ENCODE measurements at regions of chr1 and their contacts with region 1.

Region 1: DNA sequence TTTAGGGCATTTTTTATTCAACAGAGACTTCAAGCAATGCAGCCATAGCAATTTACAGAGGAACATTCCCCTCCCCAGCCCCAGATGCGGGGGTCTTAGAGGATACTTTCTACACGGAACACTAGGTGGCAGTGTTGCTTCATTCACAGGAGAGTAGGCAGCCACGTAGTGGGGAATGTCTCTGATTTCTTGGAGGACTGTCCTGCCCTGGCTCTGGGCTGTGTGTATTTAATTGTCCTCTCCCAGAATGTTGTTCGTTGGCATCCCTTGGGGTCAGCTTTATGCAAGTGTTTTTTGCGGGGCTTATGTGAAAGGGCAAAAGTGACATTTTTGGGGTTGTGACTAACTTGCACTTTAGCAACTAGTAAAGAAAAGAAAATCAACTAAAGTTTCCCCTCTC is 96.9 kb downstream of the PAPPA2 start:
- DNase-seq: peak in 1 of 2 donors; percentile 62
- ATAC-seq: peak; percentile 79 to 96 (median 92)
- H3K4me3 ChIP-seq: no peak overlapping the region
- H3K27ac ChIP-seq: no peak overlapping the region
- H3K4me1 ChIP-seq: peaks cover 0 to 11% (median 2%) of the 10 kb centered on the region in 9 donors
- H3K27me3 ChIP-seq: peaks cover 0 to 14% (median 5%) of the 10 kb centered on the region in 7 donors
- CTCF ChIP-seq: peak; percentile 69 to 92 (median 85)

Region 2: GRCh38 chr1:176434234-176434633 is 125.6 kb before region 1 on chr1:
- intact Hi-C with region 1: no loop called
- DNase-seq: no peak
- ATAC-seq: peak in 2 of 8 donors; percentile 15 to 82
- H3K4me3 ChIP-seq: no peak overlapping the region
- H3K27ac ChIP-seq: peak overlapping the region in 1 of 10 donors; percentile 7
- H3K4me1 ChIP-seq: peaks cover 0 to 10% (median 0%) of the 10 kb centered on the region in 9 donors
- H3K27me3 ChIP-seq: no peaks in the 10 kb centered on the region
- CTCF ChIP-seq: no peak

Region 3: DNA sequence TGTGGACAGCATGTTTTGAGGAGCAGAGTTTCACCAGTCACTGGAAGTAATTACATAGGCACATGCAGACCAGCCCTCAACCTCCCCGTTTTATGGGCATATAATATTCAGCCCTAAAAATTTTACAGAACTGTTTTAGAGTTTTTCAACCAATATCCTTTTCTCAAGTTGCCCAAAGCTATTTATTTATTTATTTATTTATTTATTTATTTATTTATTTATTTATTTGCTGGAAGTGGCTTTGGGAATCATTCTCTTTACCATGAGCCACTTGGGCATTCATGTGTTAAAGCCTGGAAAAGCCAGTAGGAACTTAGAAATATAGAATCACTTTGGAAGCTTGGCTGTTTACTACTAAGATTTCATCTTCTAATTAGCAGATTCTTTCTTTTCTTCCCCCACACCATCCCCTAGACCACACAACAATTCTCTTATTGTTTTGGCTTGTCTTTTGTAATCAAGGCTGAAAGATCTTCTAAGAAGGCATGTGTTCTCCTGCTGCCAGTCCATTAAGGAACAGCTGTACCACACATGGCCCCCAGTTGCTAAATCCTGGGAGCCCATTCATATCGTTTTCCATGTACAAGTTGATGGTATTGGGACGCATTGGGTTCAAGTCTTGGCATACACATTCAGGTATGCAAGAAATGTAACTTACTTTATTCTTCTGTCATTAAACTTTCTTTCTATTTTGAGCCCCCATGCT is 123.1 kb after region 1 on chr1:
- intact Hi-C with region 1: loop called in 1 of 10 experiments (anchors 10 kb)
- DNase-seq: no peak
- ATAC-seq: no peak
- H3K4me3 ChIP-seq: no peak overlapping the region
- H3K27ac ChIP-seq: no peak overlapping the region
- H3K4me1 ChIP-seq: peaks cover 0 to 4% (median 0%) of the 10 kb centered on the region in 9 donors
- H3K27me3 ChIP-seq: peaks cover 0 to 4% (median 0%) of the 10 kb centered on the region in 7 donors
- CTCF ChIP-seq: no peak

Region 4: GRCh38 chr1:176717066-176717750 is 157.3 kb after region 1 on chr1:
- intact Hi-C with region 1: no loop called
- DNase-seq: no peak
- ATAC-seq: peak in 4 of 8 donors; percentile 42 to 69 (median 54)
- H3K4me3 ChIP-seq: no peak overlapping the region
- H3K27ac ChIP-seq: peak overlapping the region in 1 of 10 donors; percentile 12
- H3K4me1 ChIP-seq: peaks cover 0 to 8% (median 0%) of the 10 kb centered on the region in 9 donors
- H3K27me3 ChIP-seq: no peaks in the 10 kb centered on the region
- CTCF ChIP-seq: peak in 1 of 9 donors; percentile 13

Region 5: GRCh38 chr1:176843352-176844297 is 283.7 kb after region 1 on chr1:
- intact Hi-C with region 1: loop called (anchors 1 to 10 kb)
- DNase-seq: peak in 1 of 2 donors; percentile 19
- ATAC-seq: peak in 7 of 8 donors; percentile 40 to 72 (median 54)
- H3K4me3 ChIP-seq: no peak overlapping the region
- H3K27ac ChIP-seq: no peak overlapping the region
- H3K4me1 ChIP-seq: peaks cover 0 to 37% (median 5%) of the 10 kb centered on the region in 9 donors
- H3K27me3 ChIP-seq: no peaks in the 10 kb centered on the region
- CTCF ChIP-seq: peak; percentile 26 to 74 (median 61)

Region 6: GRCh38 chr1:176880954-176881595 is 321.2 kb after region 1 on chr1:
- intact Hi-C with region 1: loop called (anchors 1 to 5 kb)
- DNase-seq: peak; percentile 60 to 68
- ATAC-seq: peak; percentile 40 to 91 (median 82)
- H3K4me3 ChIP-seq: no peak overlapping the region
- H3K27ac ChIP-seq: no peak overlapping the region
- H3K4me1 ChIP-seq: peaks cover 0 to 6% (median 0%) of the 10 kb centered on the region in 9 donors
- H3K27me3 ChIP-seq: no peaks in the 10 kb centered on the region
- CTCF ChIP-seq: peak; percentile 67 to 87 (median 84)

Measured in heart right ventricle (tissue), 16 donors.